ENCODE measurements at regions of chr9 and their contacts with region 1.

Region 1: GRCh38 chr9:129495534-129496325 is 125.2 kb downstream of the C9orf50 start:
- DNase-seq: peak; percentile 87 to 92
- ATAC-seq: peak; percentile 74 to 76
- H3K4me3 ChIP-seq: peak overlapping the region; percentile 68 to 88 (median 73)
- H3K27ac ChIP-seq: peak overlapping the region; percentile 93 to 97 (median 94)
- H3K4me1 ChIP-seq: peaks cover 22 to 24% of the 10 kb centered on the region in 2 donors
- H3K27me3 ChIP-seq: no peaks in the 10 kb centered on the region
- CTCF ChIP-seq: no peak
- POLR2A ChIP-seq: no peak

Region 2: DNA sequence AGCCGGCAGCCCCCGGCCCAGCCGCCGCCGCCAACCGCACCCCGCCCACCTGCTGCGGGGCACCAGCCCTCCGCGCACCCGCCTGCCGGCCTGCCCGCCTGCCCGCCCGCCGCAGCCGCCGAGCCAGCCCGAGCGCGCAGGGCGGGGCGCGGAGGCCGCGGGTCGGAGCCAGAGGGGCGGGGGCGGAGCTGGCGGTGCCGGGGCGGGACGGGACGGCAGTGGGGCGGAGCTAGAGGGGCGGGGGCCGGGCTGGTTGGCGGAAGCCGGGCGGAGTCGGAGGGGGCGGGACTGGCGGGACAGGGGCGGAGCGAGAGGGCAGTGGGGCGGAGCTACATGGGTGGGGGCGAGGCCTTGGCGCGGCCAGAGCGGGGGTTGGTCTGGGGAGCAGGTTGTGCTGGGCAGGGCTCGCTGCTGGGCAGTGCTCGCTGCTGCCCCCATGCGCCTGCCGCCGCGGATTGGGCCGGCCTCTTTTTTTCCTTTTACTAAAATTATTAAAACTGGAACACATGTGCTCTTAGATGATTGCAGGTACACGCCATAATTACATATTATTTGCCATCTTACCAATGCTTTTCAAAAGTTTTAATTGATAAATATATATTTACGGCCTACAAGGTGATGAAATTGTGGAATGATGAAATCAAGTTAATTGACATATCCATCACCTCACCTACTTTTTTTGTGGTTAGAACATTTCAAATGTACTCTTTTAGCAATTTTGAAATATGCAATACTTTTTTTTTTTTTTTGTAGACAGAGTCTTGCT is 467.4 kb before region 1 on chr9 and contains the start of gene SH3GLB2:
- in situ Hi-C with region 1: no loop called
- intact Hi-C with region 1: loop called (anchors 10 kb)
- DNase-seq: peak; percentile 93 to 95
- ATAC-seq: peak; percentile 68 to 72
- H3K4me3 ChIP-seq: peak within 1 kb of the TSS; percentile 64 to 81 (median 74)
- H3K27ac ChIP-seq: peak within 1 kb of the TSS; percentile 81 to 90 (median 86)
- H3K4me1 ChIP-seq: peaks cover 24% of the 10 kb centered on the region in 2 donors
- H3K27me3 ChIP-seq: no peaks in the 10 kb centered on the region
- CTCF ChIP-seq: peak; percentile 78 to 95 (median 85)
- POLR2A ChIP-seq: peak; percentile 56 to 78
- total RNA-seq, gene SH3GLB2: 33.6 to 55.1 (median 44.1) TPM

Region 3: GRCh38 chr9:129320575-129321263 is 175.0 kb before region 1 on chr9:
- in situ Hi-C with region 1: no loop called
- intact Hi-C with region 1: loop called (anchors 5 kb)
- DNase-seq: peak in 1 of 2 donors; percentile 47
- ATAC-seq: peak; percentile 77 to 88
- H3K4me3 ChIP-seq: peak overlapping the region; percentile 39 to 62 (median 48)
- H3K27ac ChIP-seq: peak overlapping the region; percentile 60 to 84 (median 75)
- H3K4me1 ChIP-seq: peaks cover 41 to 45% of the 10 kb centered on the region in 2 donors
- H3K27me3 ChIP-seq: no peaks in the 10 kb centered on the region
- CTCF ChIP-seq: no peak
- POLR2A ChIP-seq: peak; percentile 41 to 62

Region 4: DNA sequence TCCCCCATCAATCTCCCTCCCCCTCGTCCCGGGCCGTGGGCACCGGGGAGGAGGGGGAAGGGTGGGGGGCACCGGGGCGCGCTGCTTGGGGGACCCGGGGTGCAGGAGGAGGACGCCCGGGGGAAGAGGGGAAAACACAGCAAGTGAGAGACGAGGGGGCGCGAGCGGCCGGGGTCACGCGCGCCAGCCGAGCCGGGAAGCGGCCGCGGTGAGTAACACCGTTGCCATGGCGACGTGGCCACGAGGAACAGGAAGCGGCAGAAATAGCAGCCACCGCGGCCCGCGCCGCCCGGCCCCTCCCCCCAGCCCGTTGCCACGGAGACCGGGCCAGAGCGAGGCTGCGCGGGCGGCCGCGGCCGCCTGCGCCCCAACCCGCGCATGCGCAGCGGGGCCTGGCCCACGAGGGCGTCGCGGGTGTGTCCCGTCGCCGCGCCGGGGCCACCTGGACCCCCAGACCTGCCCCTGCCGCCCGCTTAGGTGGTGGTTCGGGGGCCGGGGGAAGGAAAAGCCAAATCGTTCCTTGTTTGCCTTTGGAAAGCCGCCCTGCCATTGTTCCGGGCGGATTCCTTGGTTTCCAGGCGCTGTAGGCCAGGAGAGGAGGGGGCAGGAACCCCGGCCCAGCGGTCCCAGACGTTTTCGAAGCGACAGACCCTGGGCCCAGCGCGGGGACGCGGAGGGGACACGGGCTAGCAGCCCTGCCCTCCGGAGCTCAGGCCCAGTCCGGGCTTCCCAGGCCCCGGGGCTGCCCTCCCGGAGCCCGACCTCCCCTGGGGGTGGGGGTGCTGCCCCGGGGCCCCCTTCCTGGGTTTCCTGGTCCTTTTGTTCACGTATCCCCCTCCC is 82.0 kb before region 1 on chr9:
- in situ Hi-C with region 1: no loop called
- intact Hi-C with region 1: loop called (anchors 1 kb)
- DNase-seq: peak; percentile 98 to 99
- ATAC-seq: peak; percentile 83 to 88
- H3K4me3 ChIP-seq: peak overlapping the region; percentile 60 to 85 (median 75)
- H3K27ac ChIP-seq: peak overlapping the region; percentile 85 to 100 (median 98)
- H3K4me1 ChIP-seq: peaks cover 10 to 23% of the 10 kb centered on the region in 2 donors
- H3K27me3 ChIP-seq: no peaks in the 10 kb centered on the region
- CTCF ChIP-seq: peak in 1 of 5 experiments; percentile 22
- POLR2A ChIP-seq: peak; percentile 94 to 99

Region 5: DNA sequence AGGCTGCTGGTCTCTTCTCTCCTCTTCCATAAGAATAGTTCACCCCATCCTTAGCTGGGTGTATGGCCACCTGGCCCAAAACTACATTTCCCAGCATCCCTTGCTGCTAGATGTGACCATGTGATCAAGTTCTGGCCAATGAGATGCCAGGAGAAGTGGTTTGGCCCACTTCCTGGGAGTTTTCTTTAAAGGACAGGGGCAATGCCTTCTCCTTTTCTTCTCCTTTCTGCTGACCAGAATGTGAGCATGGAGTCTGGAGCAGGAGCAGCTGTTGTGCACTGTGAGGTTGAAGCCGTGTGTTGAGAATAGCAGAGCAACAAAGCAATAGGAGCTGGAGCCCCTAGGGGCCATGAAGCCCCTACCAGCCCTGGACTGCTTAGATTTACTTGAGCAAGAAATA is 88.4 kb after region 1 on chr9:
- in situ Hi-C with region 1: no loop called
- intact Hi-C with region 1: loop called (anchors 10 kb)
- DNase-seq: peak; percentile 48 to 72
- ATAC-seq: peak; percentile 76 to 84
- H3K4me3 ChIP-seq: no peak overlapping the region
- H3K27ac ChIP-seq: peak overlapping the region; percentile 28 to 71 (median 54)
- H3K4me1 ChIP-seq: peaks cover 0 to 8% of the 10 kb centered on the region in 2 donors
- H3K27me3 ChIP-seq: no peaks in the 10 kb centered on the region
- CTCF ChIP-seq: no peak
- POLR2A ChIP-seq: no peak